ENCODE measurements at regions of chr9 and their contacts with region 1.

Region 1: DNA sequence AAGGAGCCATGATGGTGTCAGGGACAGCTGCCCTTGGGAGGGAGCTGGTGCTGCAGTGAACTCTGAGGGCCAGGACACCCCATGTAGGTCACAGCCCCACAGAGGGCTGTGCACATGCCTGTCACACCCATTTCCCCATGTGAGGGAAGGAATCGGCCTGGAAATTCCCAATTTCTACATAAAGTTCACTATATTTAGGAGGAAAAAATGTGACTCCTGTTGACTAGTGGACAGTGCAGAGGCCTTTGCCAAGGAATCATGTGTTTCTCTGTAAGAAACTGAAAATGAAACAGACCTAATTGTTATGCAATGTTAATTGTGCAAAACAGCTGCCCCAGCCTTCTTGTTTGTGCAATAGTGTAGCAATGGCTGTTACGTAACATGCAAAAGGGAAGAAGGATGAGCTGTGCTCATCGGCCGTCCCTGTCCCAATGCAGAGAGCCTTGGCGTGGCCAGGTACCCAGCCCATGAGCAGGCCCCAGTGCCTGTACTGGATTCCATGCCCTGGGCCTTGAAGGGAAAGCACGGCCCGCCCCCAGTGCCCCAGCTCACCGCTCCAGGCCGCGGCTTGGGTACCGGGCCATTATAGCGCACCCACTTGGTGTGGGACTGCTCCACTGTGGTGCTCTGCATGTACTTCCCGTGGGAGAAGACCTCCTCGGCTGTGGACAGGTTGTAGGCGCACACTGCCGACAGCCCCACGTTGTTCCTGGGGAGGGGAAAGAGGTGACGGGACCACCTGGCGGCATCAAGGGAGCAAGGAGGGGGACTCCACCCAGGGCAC is 70.0 kb downstream of the SECISBP2 start:
- H3K4me3 Mint-ChIP-seq: peak overlapping the region; percentile 9
- H3K27ac Mint-ChIP-seq: peak overlapping the region; percentile 78
- H3K4me1 Mint-ChIP-seq: peaks cover 50% of the 10 kb centered on the region
- H3K27me3 Mint-ChIP-seq: no peaks in the 10 kb centered on the region

Region 2: DNA sequence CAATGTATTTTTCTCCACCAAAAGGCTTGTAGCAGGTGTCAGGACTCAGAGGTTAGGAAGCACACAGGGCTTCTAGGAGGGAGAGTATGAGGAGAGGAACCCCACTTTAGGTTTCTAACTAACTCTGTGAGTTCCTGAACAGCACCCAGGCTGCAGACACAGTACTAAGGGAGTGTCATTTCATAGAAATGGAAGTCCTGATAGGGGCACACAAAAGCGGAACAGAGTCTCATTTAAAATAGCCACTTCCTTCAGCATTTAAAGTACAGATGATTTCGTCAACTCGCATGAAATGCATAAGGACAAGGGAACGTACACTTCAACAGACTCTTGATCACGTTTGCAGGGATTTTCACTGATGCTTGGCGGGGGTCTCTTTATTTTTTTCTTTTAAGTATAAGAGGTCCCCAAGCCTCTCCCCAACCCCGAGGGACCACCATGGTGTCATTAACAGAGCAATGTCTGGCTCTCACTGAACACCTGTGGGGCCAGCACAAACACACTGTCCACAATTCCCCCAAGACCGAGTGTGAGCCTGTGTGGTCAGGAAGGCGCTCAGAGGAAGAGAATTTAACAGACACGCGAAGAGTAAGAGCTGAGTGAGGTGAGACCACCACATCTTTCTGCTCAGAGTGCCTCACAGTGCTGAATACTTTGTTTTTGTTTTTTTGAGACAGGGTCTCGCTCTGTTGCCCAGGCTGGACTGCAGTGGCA is 12.3 kb after region 1 on chr9:
- intact Hi-C with region 1: loop called (anchors 1 kb)
- H3K4me3 Mint-ChIP-seq: peak overlapping the region; percentile 55
- H3K27ac Mint-ChIP-seq: peak overlapping the region; percentile 94
- H3K4me1 Mint-ChIP-seq: peaks cover 79% of the 10 kb centered on the region
- H3K27me3 Mint-ChIP-seq: no peaks in the 10 kb centered on the region